Common myeloid progenitor, CD34-positive (primary cell): ENCODE measurements at regions of chr2 and their contacts with region 1.

Region 1: GRCh38 chr2:224369028-224369632 is 32.8 kb downstream of the FAM124B start:
- DNase-seq: peak; percentile 57 to 75 (median 67)
- H3K4me3 ChIP-seq: no peak overlapping the region
- H3K27ac ChIP-seq: no peak overlapping the region
- H3K4me1 ChIP-seq: no peaks in the 10 kb centered on the region
- H3K27me3 ChIP-seq: no peaks in the 10 kb centered on the region

Region 2: GRCh38 chr2:223970343-223971128 is 398.6 kb before region 1 on chr2:
- CTCF ChIA-PET with region 1: interaction called, 10 read pairs
- POLR2A ChIA-PET with region 1: no interaction called
- DNase-seq: peak; percentile 64 to 84 (median 74)
- H3K4me3 ChIP-seq: no peak overlapping the region
- H3K27ac ChIP-seq: no peak overlapping the region
- H3K4me1 ChIP-seq: no peaks in the 10 kb centered on the region
- H3K27me3 ChIP-seq: no peaks in the 10 kb centered on the region

Region 3: GRCh38 chr2:224392545-224392944 is 23.4 kb after region 1 on chr2:
- CTCF ChIA-PET with region 1: interaction called, 51 read pairs
- POLR2A ChIA-PET with region 1: no interaction called
- DNase-seq: peak in 1 of 3 donors; percentile 22
- H3K4me3 ChIP-seq: no peak overlapping the region
- H3K27ac ChIP-seq: no peak overlapping the region
- H3K4me1 ChIP-seq: peaks cover 0 to 31% (median 10%) of the 10 kb centered on the region in 4 experiments
- H3K27me3 ChIP-seq: no peaks in the 10 kb centered on the region

Region 4: DNA sequence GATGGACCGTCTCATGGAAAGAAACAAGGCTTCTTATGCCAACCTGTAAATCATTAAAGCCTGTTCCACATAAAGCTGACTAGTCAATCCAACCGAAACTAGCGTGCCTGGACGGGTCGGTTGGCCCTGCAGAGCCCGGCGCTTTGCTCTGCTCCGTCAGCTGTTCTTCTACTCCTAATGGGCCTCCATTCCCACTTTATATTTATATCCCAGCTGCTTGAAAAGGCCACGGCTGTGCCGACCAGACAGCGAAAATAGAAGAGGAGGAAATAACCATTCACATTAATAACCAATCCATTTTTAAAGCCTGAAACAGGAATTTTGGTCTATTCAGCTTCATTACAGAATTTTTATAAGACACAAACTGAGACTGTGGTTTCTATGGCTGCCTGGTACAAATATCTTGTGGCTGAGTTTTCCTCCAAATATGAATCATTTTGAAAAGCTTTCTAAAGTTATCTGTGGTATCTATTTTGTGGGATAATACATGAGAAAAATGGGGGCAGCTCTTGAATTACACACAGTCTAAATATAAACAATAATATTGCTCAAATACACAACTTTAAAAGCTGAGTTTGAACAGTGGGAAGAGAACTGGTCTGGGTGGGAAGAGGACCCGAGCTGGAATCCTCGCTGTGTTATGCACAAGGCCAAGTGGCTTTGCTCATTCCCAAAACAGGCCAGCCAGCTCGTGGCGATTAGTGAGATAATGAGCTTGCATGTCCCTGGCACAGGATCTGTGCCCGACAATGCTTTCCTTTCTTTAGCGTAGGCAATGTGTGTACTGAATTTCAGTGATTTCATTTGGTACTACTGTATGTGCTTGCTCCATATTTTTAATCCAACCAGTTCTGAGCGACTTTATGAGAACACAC is 43.2 kb after region 1 on chr2:
- CTCF ChIA-PET with region 1: interaction called, 18 read pairs
- POLR2A ChIA-PET with region 1: no interaction called
- DNase-seq: no peak
- H3K4me3 ChIP-seq: no peak overlapping the region
- H3K27ac ChIP-seq: no peak overlapping the region
- H3K4me1 ChIP-seq: peaks cover 4 to 20% (median 9%) of the 10 kb centered on the region in 4 experiments
- H3K27me3 ChIP-seq: no peaks in the 10 kb centered on the region

Region 5: DNA sequence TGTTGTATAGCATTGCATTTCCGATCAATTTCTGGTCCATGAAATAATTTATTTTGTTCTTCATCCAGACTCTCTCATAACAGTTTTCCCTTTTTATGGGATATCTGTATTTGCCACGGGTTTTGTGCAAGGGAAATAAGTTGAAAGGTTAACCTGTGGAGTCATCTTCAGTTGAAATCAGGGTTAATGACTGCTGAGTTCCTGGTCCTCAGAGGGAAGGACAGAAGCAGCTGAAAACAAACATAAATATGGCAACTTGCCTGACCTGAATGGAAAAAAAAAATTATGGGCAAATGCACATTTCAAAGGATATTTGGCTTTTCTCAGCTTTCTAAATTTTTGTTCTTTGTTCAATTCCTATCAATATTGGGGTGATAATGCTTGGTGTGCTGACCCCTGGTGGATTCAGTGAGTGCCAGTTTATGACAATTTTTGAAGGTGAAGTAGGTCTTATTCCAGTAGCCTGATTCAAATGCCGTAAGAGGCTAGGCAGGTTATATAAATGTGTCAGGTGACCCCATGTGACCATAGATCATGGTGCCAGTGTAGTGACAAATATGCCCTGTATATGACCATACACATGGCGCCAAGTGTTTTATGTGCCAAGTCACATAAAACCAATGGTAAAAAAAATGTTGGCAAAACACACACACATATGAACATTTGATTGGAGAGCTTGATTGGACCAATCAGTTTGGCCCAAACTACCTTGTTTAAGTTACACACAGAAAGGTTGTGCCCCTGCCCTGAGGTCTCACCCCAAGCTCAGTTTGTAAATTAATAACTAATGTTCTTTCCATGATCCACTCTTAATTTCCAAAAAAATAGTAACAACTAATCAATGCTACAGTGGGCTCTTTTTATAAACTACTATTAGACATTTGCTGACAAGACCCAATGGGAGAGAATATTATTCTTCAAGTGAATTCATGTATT is 80.3 kb after region 1 on chr2:
- CTCF ChIA-PET with region 1: interaction called, 44 read pairs
- POLR2A ChIA-PET with region 1: no interaction called
- DNase-seq: peak; percentile 57 to 79 (median 75)
- H3K4me3 ChIP-seq: no peak overlapping the region
- H3K27ac ChIP-seq: no peak overlapping the region
- H3K4me1 ChIP-seq: no peaks in the 10 kb centered on the region
- H3K27me3 ChIP-seq: no peaks in the 10 kb centered on the region